Activated T-helper 1 cell treated with anti-CD3 and anti-CD28 coated beads, Interleukin-12 subunit alpha, Interleukin-12 subunit beta, Interleukin-2, Interleukin-4 antibody, amounts not matched to agents 30 ng/mL and 10 ng/mL and 1 ng/mL, durations not matched to agents 14 hours and 24 hours and 36 hours (primary cell): ENCODE measurements at regions of chr22 and their contacts with region 1.

Region 1: DNA sequence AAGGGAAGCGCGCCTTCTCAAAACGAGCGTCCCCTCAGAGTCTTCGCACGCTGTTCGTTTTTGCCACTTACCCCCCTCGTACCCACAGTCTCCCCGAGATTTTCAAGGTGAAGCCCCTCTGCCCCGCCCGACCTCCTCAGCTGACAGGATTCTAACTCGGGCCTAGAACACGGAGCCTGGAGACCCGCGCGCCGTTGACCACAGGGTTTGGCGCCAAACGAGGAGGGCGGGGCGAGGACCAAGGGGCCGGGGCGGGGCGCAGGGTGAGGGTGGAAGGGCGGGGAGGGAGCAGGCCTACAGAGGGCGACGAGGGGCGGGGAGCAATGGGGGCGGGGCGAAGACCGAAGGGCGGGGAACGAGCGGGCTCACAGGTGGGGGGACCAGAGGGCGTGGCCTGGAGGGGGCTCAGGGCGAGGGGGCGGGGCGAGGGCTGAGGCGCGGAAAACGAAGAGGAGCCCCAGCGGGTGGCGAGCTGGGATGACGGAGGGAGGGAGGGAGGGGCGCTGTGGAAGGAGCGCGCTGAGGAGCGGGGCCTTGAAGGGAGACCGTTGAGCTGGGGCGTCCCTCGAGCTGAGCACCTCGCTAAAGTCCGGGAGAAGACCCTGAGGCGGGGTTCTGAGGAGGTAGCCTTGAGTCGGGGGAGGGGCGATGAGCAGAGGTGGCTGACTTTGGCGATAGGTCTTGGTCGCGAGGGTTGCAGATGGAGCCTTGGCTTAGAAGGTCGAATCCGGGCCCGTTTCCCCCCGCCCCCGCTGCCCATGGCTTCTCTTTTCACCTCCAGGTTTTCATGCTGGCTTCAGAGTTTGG is at the start of gene DMC1:
- DNase-seq: peak; percentile 86
- H3K4me3 Mint-ChIP-seq: peak within 1 kb of the TSS; percentile 90
- H3K27ac Mint-ChIP-seq: peak within 1 kb of the TSS; percentile 92
- H3K4me1 Mint-ChIP-seq: peaks cover 16% of the 10 kb centered on the region
- H3K27me3 Mint-ChIP-seq: no peaks in the 10 kb centered on the region
- total RNA-seq, gene DMC1: 11.2 and 11.7 TPM in 2 replicates

Region 2: DNA sequence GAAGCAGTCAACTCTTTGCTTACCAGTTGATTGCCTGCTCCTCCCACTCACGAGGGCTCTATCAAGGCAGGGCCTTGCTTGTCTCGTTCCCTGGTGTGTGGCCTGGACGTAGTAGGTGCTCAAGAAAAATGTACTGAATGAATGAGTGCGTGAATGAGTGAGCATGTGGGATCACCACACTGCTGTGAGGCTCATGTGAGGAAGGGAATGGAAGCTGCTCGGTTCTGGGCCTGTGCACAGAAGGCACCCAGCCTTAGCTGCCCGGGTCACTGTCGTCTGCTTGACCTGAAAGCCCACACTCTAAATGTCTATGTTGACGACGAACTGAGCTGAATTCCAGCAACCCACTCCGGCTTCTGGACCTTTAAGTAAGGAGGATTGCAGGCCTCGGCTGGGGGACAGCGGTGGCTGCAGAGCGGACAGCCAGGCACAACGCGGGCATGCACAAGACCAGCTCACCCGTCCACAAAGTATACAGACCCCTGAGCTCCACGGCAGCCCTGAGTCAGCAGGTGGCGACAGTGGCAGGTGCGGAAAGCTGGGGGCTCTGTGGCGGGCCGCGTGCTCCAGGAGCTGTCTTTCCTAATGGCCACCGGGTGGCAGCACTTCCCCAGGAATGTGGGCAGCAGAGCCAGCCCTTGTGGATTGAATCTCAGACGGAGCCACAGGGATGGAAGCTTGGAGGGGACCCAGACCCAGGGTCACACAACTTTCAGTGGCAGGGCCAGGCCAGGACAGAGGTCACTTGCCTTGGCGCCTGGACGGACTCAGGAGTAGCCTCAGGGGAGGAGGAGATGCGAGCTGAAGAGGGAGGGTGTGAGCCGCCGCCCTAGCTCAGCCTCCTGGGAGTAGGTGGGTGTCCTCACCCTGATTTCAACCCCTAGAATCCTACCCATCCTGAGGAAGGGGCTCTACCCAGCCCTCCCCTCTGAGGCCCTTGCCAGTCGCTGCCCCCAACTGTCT is 518.0 kb before region 1 on chr22:
- intact Hi-C with region 1: loop called (anchors 1 kb)
- DNase-seq: peak; percentile 59
- H3K4me3 Mint-ChIP-seq: no peak overlapping the region
- H3K27ac Mint-ChIP-seq: no peak overlapping the region
- H3K4me1 Mint-ChIP-seq: peaks cover 13% of the 10 kb centered on the region
- H3K27me3 Mint-ChIP-seq: peaks cover 8% of the 10 kb centered on the region

Region 3: DNA sequence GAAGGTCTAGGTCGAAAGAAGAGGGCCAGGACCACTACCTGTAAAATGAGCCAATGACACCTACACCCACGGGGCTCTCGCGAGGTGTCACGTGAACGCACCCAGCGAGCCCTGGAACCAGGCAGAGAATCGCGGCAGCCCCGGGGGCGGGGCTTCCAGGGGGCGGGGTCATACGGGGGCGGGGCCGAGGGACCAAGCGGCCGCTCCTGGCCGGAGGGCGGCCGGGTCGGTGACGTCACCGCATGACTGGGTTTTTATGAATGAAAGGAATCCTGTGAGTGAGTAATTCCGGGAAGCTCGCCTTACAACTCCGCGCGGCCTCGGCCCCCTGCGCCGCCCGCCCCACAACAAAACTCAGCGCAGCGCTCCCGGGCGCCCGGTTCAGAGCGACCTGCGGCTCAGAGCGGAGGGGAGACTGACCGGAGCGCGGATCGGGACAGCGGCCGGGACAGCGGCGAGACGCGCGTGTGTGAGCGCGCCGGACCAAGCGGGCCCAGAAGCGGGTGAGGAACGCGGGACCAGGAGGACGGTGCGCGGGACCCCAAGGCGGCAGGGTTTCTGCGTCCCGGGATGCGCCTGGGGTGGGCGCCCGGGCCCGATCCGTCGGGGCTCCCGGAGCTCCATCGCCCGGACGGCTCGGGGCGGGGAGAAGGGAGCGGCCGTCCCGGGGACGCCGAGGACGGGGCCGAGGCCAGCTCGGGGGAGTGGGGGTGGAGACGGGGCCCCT is 368.3 kb before region 1 on chr22 and contains the start of gene MAFF:
- intact Hi-C with region 1: loop called (anchors 1 kb)
- DNase-seq: peak; percentile 80
- H3K4me3 Mint-ChIP-seq: peak within 1 kb of the TSS; percentile 89
- H3K27ac Mint-ChIP-seq: peak within 1 kb of the TSS; percentile 82
- H3K4me1 Mint-ChIP-seq: peaks cover 42% of the 10 kb centered on the region
- H3K27me3 Mint-ChIP-seq: peaks cover 3% of the 10 kb centered on the region
- total RNA-seq, gene MAFF: 12.3 and 12.5 TPM in 2 replicates

Region 4: GRCh38 chr22:38398609-38399461 is 171.3 kb before region 1 on chr22:
- intact Hi-C with region 1: loop called (anchors 1 kb)
- DNase-seq: peak; percentile 76
- H3K4me3 Mint-ChIP-seq: peak overlapping the region; percentile 84
- H3K27ac Mint-ChIP-seq: peak overlapping the region; percentile 23
- H3K4me1 Mint-ChIP-seq: peaks cover 35% of the 10 kb centered on the region
- H3K27me3 Mint-ChIP-seq: peaks cover 9% of the 10 kb centered on the region

Region 5: DNA sequence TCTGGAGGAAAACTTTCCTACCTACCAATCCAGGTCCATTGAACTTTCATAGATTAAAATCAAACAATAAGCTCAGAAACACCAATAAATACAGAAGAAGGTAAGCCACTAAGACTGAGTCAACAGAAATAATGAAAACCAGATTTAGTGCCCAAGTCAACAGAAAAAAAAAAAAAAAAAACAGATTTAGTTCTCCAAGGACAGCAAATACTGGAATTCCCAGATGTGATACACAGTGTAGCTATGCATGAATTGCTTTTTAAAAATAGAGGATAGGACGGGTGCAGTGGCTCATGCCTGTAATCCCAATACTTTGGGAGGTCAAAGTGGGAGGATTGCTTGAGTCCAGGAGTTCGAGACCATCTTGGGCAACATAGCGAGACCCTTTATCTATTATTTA is 15.9 kb before region 1 on chr22:
- intact Hi-C with region 1: no loop called
- DNase-seq: no peak
- H3K4me3 Mint-ChIP-seq: no peak overlapping the region
- H3K27ac Mint-ChIP-seq: no peak overlapping the region
- H3K4me1 Mint-ChIP-seq: no peaks in the 10 kb centered on the region
- H3K27me3 Mint-ChIP-seq: no peaks in the 10 kb centered on the region

Region 6: DNA sequence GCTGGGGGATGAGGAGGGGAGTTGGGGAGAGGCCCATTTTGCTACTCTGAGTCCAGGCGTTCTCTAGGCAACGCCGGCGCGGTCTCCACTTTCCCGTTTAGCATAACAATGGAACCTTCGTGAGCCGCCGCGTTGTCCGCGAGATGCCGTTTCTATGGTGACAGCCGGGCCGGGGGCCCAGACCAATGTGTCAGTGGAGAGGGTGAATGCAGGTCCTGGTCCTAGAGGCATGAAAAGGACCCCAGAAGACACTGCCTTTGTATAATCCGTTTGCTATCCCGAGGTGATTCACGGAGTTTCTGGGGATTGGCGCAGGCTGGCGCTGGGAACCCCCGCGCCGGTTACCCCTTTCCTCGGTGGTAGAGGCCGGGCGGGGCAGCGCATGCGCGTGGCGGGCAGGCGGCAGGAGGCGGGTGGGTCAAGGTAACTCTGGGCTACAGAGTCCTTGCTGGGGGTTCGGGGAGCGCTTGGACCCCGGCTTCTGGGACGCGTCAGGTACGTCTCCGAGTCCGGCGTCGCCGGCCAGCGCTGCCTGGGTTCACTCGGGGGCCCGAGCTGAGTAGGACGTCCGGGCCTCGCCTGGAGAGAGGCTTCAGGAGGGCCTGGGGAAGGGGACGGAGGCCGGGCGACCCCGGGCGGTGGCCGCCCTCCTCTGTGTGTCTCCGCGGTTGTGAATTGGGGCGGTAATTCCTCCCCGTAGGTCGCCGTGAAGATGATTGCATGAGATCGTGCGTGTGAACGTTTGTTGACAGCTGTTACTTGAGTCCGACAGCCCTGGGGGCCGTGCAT is 86.3 kb after region 1 on chr22 and contains the starts of genes CBY1 and FAM227A:
- intact Hi-C with region 1: loop called (anchors 1 kb)
- DNase-seq: peak; percentile 83
- H3K4me3 Mint-ChIP-seq: peak within 1 kb of the TSS; percentile 93
- H3K27ac Mint-ChIP-seq: peak within 1 kb of the TSS; percentile 98
- H3K4me1 Mint-ChIP-seq: peaks cover 16% of the 10 kb centered on the region
- H3K27me3 Mint-ChIP-seq: no peaks in the 10 kb centered on the region
- total RNA-seq, gene CBY1: 8.6 and 8.8 TPM in 2 replicates
- total RNA-seq, gene FAM227A: 0.16 and 0.78 TPM in 2 replicates